ENCODE measurements at regions of chr16 and their contacts with region 1.

Region 1: GRCh38 chr16:527006-527753 is at the start of gene CAPN15:
- DNase-seq: peak; percentile 79
- H3K4me3 Mint-ChIP-seq: peak within 1 kb of the TSS; percentile 90
- H3K27ac Mint-ChIP-seq: peak within 1 kb of the TSS; percentile 88
- H3K4me1 Mint-ChIP-seq: peaks cover 8% of the 10 kb centered on the region
- H3K27me3 Mint-ChIP-seq: no peaks in the 10 kb centered on the region
- CTCF ChIP-seq: no peak
- total RNA-seq, gene CAPN15: 68.2 and 81.1 TPM in 2 replicates

Region 2: DNA sequence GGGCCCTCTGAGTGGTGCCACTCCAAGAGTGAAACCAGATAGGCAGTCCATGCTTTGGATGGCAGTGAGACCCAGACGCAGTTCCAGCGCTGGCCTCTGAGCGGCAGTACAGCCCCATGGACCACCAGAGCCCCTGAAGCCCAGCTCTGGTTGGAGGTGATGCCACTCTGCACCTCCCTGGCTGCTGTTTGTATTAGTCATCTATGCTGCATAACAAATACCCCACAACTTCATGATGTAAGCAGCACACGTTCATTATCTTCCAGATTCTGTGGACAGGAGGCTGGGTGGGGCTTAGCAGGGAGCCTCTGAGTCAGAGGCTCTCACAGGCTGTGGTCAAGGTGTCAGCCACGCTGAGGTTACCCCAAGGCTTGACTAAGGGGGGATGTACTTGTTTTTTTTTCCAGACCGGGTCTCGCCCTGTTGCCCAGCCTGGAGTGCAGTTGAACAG is 135.3 kb before region 1 on chr16:
- CTCF ChIA-PET with region 1: no interaction called
- POLR2A ChIA-PET with region 1: interaction called, 3 read pairs
- intact Hi-C with region 1: loop called (anchors 1 kb)
- DNase-seq: peak; percentile 70
- H3K4me3 Mint-ChIP-seq: no peak overlapping the region
- H3K27ac Mint-ChIP-seq: no peak overlapping the region
- H3K4me1 Mint-ChIP-seq: no peaks in the 10 kb centered on the region
- H3K27me3 Mint-ChIP-seq: no peaks in the 10 kb centered on the region
- CTCF ChIP-seq: peak; percentile 88

Region 3: GRCh38 chr16:401468-402348 is 125.5 kb before region 1 on chr16 and contains the start of gene DECR2:
- CTCF ChIA-PET with region 1: no interaction called
- POLR2A ChIA-PET with region 1: interaction called, 20 read pairs
- intact Hi-C with region 1: no loop called
- DNase-seq: peak; percentile 89
- H3K4me3 Mint-ChIP-seq: peak within 1 kb of the TSS; percentile 80
- H3K27ac Mint-ChIP-seq: peak within 1 kb of the TSS; percentile 63
- H3K4me1 Mint-ChIP-seq: peaks cover 7% of the 10 kb centered on the region
- H3K27me3 Mint-ChIP-seq: no peaks in the 10 kb centered on the region
- CTCF ChIP-seq: peak; percentile 55
- total RNA-seq, gene DECR2: 29.0 and 37.2 TPM in 2 replicates

Region 4: DNA sequence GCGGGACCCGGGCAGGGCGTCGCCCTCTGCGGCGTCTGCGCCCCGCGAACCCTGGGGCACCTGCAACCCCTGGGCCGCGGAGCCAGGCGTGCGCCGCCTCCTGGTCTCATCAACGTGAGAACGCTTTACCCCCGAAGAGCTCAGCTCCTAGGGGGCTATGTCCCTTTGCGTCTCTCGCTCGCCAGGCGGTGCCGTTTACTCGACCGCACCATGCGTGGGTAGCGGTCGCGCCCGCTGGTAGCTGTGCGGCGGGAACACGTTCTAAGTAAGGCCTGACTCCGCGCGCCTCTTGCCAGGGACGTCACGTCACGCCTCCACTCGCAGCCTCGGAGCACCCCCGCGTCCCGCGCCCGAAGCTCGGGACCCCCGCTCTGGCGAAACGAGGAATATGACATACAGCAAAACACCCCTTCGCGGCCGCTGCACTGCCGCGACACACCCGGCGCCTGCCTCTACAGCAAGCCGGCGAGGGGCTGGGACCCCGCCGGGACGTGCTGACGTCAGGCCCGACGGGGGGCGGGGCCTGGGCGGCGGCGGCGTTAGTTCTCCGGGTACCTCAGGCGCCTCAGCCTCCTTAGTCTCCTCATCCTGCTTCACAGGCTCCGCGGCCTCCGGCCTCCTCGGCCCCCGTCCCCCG is 102.0 kb before region 1 on chr16 and contains the start of gene RAB11FIP3:
- CTCF ChIA-PET with region 1: interaction called, 6 read pairs
- POLR2A ChIA-PET with region 1: interaction called, 40 read pairs
- intact Hi-C with region 1: loop called (anchors 10 kb)
- DNase-seq: peak; percentile 74
- H3K4me3 Mint-ChIP-seq: peak within 1 kb of the TSS; percentile 73
- H3K27ac Mint-ChIP-seq: peak within 1 kb of the TSS; percentile 71
- H3K4me1 Mint-ChIP-seq: peaks cover 35% of the 10 kb centered on the region
- H3K27me3 Mint-ChIP-seq: no peaks in the 10 kb centered on the region
- CTCF ChIP-seq: no peak
- total RNA-seq, gene RAB11FIP3: 37.5 and 40.6 TPM in 2 replicates

Region 5: DNA sequence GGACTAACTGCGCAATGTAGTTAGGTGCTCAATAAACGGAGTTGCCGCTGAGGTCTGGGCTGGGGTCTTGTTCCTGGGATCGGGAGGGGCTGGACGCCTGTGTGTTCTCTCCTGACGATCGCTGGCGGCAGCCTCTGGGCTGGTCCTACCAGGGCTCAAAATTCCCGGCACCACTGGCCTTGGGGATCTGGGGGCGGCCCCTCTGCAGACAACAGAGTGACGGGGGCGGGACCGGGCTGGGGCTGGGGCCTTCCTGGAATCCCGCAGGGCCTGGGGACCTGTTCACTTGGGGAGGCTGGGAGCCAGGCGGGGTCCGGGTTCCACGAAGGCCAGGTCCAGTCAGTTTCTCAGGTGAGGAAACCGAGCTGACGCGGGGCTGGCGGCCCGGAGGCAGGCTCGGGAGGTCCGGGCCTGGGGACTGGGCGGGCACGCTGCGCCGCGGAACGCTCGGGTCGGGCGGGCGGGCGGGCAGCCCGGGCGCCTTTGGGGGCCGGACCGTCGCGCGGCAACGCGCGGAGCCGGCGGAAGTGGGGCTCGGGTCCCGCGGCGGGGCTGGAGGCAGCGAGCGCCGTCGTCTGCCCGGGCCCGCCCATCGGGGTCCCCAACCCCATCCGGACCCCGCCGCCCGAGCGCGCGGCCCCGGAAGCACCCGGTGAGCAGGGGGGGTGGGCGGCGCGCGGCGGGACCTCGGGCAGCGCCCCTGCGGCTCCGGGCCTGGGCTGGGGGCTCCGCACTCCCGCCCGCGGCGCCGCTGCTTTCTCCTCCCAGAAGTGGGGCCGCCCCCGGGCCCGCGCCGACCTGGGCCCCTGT is 42.5 kb after region 1 on chr16 and contains the start of gene PIGQ:
- CTCF ChIA-PET with region 1: no interaction called
- POLR2A ChIA-PET with region 1: interaction called, 18 read pairs
- intact Hi-C with region 1: no loop called
- DNase-seq: peak; percentile 45
- H3K4me3 Mint-ChIP-seq: peak within 1 kb of the TSS; percentile 72
- H3K27ac Mint-ChIP-seq: peak within 1 kb of the TSS; percentile 82
- H3K4me1 Mint-ChIP-seq: peaks cover 8% of the 10 kb centered on the region
- H3K27me3 Mint-ChIP-seq: no peaks in the 10 kb centered on the region
- CTCF ChIP-seq: no peak
- total RNA-seq, gene PIGQ: 45.6 and 47.4 TPM in 2 replicates